ENCODE measurements at regions of chr12 and their contacts with region 1.

Region 1: DNA sequence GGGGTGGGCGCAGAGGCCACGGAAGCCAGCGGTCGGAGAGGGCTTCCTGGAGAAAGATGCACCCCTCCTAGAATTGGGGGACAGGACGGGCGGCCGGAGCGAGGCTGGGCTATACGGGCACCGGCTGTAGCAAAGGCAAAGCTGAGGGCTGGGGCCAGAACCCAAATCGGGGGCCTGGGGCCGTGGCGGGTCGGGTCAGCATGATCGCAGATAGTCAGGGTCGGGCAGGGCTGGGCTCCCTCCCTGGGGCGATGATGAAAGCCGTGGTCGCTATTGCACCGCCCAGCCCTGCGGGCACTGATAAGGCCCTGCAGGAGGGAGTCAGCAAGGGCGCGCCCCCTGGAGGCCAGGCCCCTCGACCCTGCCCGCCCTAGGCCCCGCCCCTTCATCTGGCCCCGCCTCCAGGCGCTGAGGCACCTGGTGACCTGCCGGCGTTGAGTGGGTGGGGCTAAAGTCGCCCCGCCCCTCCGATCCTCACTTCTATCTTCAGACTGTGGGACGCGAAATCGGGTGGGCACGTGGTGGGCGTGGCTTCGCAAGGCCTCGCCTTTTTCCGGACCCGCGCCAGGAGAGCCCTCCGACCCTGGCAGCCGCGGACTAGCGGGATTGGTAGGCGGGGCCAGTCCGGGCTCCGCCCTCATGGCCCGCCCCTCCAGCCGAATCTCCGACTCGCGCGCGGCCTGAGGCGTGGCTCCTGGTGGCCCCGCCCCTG is 418 bp upstream of the SH2B3 start:
- DNase-seq: peak; percentile 97
- ATAC-seq: peak; percentile 93
- H3K4me3 ChIP-seq: peak overlapping the region; percentile 23 to 73
- H3K27ac ChIP-seq: no peak overlapping the region
- H3K4me1 ChIP-seq: no peaks in the 10 kb centered on the region
- H3K27me3 ChIP-seq: no peaks in the 10 kb centered on the region

Region 2: GRCh38 chr12:111685744-111686517 is 280.6 kb after region 1 on chr12 and contains the starts of genes ACAD10 and BRAP:
- intact Hi-C with region 1: loop called in 1 of 2 experiments (anchors 10 kb)
- DNase-seq: peak; percentile 96 to 98
- ATAC-seq: peak; percentile 97
- H3K4me3 ChIP-seq: peak within 1 kb of the TSS; percentile 69 to 82
- H3K27ac ChIP-seq: peak within 1 kb of the TSS in 1 of 2 donors; percentile 46
- H3K4me1 ChIP-seq: peaks cover 0 to 3% of the 10 kb centered on the region in 2 donors
- H3K27me3 ChIP-seq: no peaks in the 10 kb centered on the region
- total RNA-seq, gene ACAD10: 16.0 to 27.9 TPM
- total RNA-seq, gene BRAP: 14.0 to 18.0 TPM

Region 3: GRCh38 chr12:112125250-112125999 is 720.1 kb after region 1 on chr12 and contains the start of gene TRAFD1:
- intact Hi-C with region 1: loop called in 1 of 2 experiments (anchors 5 kb)
- DNase-seq: peak; percentile 99
- ATAC-seq: peak; percentile 100
- H3K4me3 ChIP-seq: peak within 1 kb of the TSS; percentile 53 to 70
- H3K27ac ChIP-seq: peak within 1 kb of the TSS in 1 of 2 donors; percentile 92
- H3K4me1 ChIP-seq: peaks cover 0 to 2% of the 10 kb centered on the region in 2 donors
- H3K27me3 ChIP-seq: no peaks in the 10 kb centered on the region
- total RNA-seq, gene TRAFD1: 21.2 to 35.5 TPM

Measured in aorta (tissue), 5 donors.